ENCODE measurements at regions of chr15 and their contacts with region 1.

Region 1: DNA sequence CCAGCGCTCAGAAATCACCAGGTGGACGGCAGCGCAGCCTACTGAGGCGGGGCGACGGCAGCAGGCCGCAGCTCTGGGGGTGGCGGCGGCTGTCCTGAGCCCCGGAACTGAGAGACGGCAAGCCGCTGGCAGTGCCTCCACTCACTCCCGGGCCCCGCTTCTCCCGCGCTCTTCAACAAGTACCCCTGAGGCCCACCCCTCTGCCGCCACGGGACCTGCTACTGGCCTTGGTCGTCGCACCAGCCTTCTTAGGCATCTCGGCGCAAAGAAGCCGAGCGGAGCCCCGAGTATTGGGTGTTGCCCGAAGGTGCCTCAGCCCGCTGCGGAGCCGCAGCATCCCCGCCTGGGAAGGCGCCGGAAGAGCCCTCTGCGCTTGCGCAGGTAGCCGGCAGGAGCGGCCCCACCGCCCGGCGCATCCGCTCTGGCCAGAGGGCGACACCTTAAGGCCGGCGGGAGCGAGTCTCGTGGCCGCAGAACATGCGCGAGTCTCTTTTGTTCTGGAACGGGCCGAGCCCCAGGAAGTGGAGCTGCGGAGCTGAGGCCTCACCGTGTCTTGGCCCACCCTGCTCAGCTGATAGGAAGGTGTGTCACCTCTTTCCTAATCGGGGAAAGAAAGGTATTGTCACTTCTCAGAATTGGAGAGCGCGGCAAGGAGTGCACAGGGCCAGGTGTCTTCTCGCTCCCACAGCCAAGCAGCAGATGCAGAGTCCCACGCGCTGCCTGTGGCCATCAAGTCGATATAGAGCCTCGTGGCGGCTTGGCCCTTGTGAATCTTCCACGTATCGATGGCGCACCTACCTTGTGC is at the start of gene C15orf40:
- DNase-seq: peak; percentile 93 to 97 (median 96)
- ATAC-seq: peak; percentile 99
- H3K4me3 ChIP-seq: peak within 1 kb of the TSS; percentile 92
- H3K27ac ChIP-seq: peak within 1 kb of the TSS; percentile 78
- H3K4me1 ChIP-seq: peaks cover 9% of the 10 kb centered on the region
- H3K27me3 ChIP-seq: no peaks in the 10 kb centered on the region
- total RNA-seq, gene C15orf40: 11.0 to 16.0 (median 13.2) TPM

Region 2: DNA sequence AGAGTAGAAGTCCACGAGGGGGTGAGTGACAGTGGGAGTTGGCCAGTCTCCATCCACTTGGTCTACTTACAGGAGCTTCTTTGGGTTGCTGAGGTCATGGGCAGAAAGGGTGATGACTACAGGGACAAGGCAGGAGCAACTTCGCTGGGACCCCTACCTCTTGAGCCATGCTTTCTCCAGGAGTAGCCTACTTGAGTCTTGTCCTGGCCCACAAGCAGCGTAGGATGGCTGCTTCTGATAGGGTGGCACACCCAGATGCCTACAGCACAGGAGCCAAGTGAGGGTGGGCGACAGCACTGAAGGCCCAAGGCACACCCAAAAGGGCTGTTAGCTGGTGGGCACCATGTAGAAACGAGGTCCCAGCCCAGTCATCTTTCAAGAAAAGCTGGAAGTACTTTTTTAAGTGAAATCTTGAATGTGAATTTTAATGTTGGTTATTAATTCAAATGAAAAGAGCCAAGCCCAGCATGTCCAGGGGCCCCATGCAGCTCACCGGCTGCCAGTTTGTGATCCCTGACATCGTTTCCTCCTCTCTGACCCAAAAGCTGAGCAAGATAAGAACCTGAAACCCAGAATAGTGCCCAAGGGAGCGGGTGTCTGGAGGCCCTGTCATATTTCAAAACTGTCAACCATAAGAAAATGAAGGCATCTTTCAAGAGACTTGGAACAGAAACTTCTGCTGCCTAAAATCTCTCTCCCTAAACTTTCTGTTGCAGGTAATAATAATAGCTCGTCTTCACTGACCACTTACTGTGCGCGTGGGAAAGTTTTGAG is 362.1 kb before region 1 on chr15:
- intact Hi-C with region 1: no loop called
- DNase-seq: no peak
- ATAC-seq: no peak
- H3K4me3 ChIP-seq: no peak overlapping the region
- H3K27ac ChIP-seq: no peak overlapping the region
- H3K4me1 ChIP-seq: no peaks in the 10 kb centered on the region
- H3K27me3 ChIP-seq: no peaks in the 10 kb centered on the region

Region 3: GRCh38 chr15:83066734-83067637 is 55.5 kb after region 1 on chr15 and contains the start of gene BTBD1:
- intact Hi-C with region 1: loop called in 1 of 4 experiments (anchors 10 kb)
- DNase-seq: peak; percentile 98 to 99 (median 98)
- ATAC-seq: peak; percentile 99
- H3K4me3 ChIP-seq: peak within 1 kb of the TSS; percentile 81
- H3K27ac ChIP-seq: peak within 1 kb of the TSS; percentile 86
- H3K4me1 ChIP-seq: peaks cover 5% of the 10 kb centered on the region
- H3K27me3 ChIP-seq: no peaks in the 10 kb centered on the region
- total RNA-seq, gene BTBD1: 113 to 134 (median 128) TPM

Region 4: GRCh38 chr15:83112233-83112955 is 100.9 kb after region 1 on chr15:
- intact Hi-C with region 1: loop called in 2 of 4 experiments (anchors 2 to 10 kb)
- DNase-seq: peak in 2 of 3 donors; percentile 37 to 67
- ATAC-seq: peak; percentile 71 to 86
- H3K4me3 ChIP-seq: no peak overlapping the region
- H3K27ac ChIP-seq: peak overlapping the region; percentile 65
- H3K4me1 ChIP-seq: peaks cover 15% of the 10 kb centered on the region
- H3K27me3 ChIP-seq: no peaks in the 10 kb centered on the region

Region 5: DNA sequence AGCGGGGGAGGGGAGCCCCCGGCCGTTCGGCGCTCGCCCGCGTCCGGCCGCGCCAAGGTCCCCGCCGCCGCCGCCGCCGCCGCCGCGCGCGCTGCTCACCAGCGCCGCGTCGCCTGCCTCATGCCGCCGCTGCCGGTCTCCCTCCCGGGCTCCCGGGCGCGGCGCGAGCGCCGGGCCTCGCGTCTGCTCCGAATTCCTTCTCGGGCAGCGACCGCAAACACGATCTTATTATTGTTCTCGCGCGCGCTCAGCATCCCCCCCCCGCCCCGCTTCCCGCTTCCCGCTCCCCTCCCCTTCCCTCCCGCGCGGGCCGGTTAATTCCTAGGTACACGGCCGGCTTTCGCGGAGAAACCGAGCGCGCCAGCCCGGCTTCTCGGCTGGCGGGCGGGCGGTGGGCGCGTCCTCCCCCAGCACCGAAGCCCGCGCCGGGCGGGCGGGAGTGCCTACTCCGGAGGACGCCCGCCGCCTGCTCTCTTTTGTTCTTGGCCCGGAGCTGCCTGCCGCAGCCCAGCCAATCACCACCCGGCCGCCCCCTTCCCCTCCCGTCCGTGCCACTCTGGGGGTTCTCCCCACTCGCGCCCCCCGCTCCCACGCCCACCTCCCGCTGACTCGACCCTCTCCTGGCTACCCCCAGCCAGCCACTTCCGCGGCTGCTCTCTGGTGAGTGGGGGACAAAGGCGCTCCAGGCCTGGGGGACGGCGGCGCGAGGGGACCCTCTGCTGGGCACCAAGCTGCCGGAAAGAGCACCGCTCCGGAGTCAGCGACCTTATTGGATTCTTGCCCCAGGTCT is 196.3 kb after region 1 on chr15 and contains the start of gene HDGFL3:
- intact Hi-C with region 1: loop called in 1 of 4 experiments (anchors 5 kb)
- DNase-seq: peak; percentile 59 to 86 (median 85)
- ATAC-seq: peak; percentile 55 to 66
- H3K4me3 ChIP-seq: peak within 1 kb of the TSS; percentile 79
- H3K27ac ChIP-seq: peak within 1 kb of the TSS; percentile 88
- H3K4me1 ChIP-seq: no peaks in the 10 kb centered on the region
- H3K27me3 ChIP-seq: no peaks in the 10 kb centered on the region
- total RNA-seq, gene HDGFL3: 34.1 to 45.2 (median 36.4) TPM